Transverse colon (tissue), 4 donors: ENCODE measurements at regions of chr13 and their contacts with region 1.

Region 1: GRCh38 chr13:41216160-41216559 is 21.8 kb upstream of the KBTBD7 start:
- DNase-seq: no peak
- H3K4me3 ChIP-seq: no peak overlapping the region
- H3K27ac ChIP-seq: no peak overlapping the region
- H3K4me1 ChIP-seq: no peaks in the 10 kb centered on the region
- H3K27me3 ChIP-seq: no peaks in the 10 kb centered on the region
- CTCF ChIP-seq: no peak
- EP300 ChIP-seq: no peak
- POLR2A ChIP-seq: no peak

Region 2: GRCh38 chr13:40963919-40964318 is 252.2 kb before region 1 on chr13:
- in situ Hi-C with region 1: no loop called
- intact Hi-C with region 1: no loop called
- DNase-seq: no peak
- H3K4me3 ChIP-seq: no peak overlapping the region
- H3K27ac ChIP-seq: no peak overlapping the region
- H3K4me1 ChIP-seq: peaks cover 7 to 83% (median 36%) of the 10 kb centered on the region in 4 donors
- H3K27me3 ChIP-seq: no peaks in the 10 kb centered on the region
- CTCF ChIP-seq: no peak
- EP300 ChIP-seq: no peak
- POLR2A ChIP-seq: no peak

Region 3: DNA sequence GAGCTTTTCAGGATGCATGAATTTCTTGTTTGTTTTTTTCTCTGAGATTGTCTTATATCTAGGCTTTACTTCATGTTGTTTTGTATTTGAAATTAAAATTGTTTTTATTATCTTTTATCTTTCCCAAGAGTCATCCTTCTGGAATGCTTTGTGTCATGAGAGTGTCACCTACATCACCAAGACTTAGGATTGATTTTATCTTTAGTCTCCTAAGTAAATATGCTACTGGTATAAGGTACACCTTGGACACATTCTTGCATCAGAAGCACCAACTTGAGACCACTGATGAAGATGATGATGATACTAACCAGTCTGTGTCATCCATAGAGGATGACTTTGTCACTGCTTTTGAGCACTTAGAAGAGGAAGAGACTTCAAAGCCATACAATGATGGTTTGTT is 1082.2 kb after region 1 on chr13:
- in situ Hi-C with region 1: no loop called
- intact Hi-C with region 1: loop called (anchors 5 kb)
- DNase-seq: no peak
- H3K4me3 ChIP-seq: no peak overlapping the region
- H3K27ac ChIP-seq: no peak overlapping the region
- H3K4me1 ChIP-seq: no peaks in the 10 kb centered on the region
- H3K27me3 ChIP-seq: no peaks in the 10 kb centered on the region
- CTCF ChIP-seq: no peak
- EP300 ChIP-seq: no peak
- POLR2A ChIP-seq: no peak